Posterior cingulate gyrus (tissue), 11 donors: ENCODE measurements at regions of chr3 and their contacts with region 1.

Region 1: GRCh38 chr3:13452490-13453335 is 27.4 kb upstream of the HDAC11 start:
- DNase-seq: peak in 5 of 10 donors; percentile 22 to 85 (median 37)

Region 2: DNA sequence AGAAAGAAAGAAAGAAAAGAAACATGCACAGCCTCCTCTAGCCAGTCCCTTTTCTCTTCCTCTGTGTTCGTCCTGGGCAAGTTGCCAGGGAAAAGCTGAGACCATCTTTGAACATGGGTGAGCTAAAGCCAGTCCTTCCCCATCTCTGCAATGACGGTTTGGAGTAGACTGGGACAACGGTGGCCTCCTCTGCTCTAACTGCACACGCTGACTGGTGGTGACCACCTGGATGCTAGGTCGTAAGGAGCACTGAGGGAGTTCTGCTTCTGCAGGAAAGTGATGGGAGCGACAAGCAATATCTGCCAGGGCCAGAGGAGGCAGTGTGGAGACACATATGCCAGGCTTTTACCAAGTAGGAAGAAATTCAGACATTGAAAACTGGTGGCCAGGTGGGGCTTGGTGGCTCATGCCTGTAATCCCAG is 144.3 kb before region 1 on chr3:
- intact Hi-C with region 1: loop called (anchors 5 kb)
- DNase-seq: peak in 9 of 10 donors; percentile 42 to 94 (median 58)